Activated CD4-positive, alpha-beta T cell treated with anti-CD3 and anti-CD28 coated beads for 36 hours (primary cell): ENCODE measurements at regions of chr11 and their contacts with region 1.

Region 1: DNA sequence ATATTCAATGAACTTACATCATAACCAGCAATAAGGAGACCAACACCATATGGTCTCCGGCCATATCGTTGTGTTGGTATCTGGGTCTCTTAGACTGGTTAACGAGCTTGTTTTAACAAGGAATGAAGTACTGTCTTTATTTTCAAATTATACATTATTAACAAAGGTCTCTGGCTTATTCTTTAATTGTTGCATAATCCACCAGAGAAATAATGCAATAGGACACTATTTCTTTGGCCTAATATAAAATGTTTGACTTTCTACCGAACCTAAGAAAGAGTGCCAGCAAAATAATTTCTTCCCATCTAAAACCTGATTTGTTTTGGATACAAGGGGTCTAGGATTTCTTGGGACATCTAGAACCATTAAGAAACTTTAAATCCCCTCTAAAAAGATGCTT is 6.4 kb downstream of the PSMA1 start:
- DNase-seq: no peak
- ATAC-seq: no peak
- H3K4me3 Mint-ChIP-seq: no peak overlapping the region
- H3K27ac Mint-ChIP-seq: no peak overlapping the region
- H3K4me1 Mint-ChIP-seq: peaks cover 20% of the 10 kb centered on the region
- H3K27me3 Mint-ChIP-seq: no peaks in the 10 kb centered on the region

Region 2: DNA sequence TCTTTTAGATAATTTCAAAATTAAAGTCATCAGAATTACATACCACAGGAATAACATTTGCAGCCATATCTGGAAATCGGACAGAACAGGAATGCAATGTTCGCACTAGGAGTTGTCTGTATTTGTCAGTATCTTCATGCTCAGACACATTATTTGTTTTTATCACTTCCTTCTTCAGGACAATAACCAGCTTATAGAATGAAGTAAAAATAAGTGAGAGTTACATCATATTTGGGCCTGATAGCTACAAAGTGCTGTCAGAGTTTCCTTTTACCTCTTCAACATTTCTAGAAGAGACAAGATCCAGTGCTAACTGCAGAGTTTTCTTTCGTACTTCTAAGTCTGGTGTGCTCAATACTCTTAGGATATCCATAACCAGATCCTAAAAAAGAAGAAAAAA is 33.1 kb before region 1 on chr11:
- CTCF ChIA-PET with region 1: no interaction called
- POLR2A ChIA-PET with region 1: no interaction called
- intact Hi-C with region 1: loop called in 1 of 2 experiments (anchors 5 kb)
- DNase-seq: no peak
- ATAC-seq: no peak
- H3K4me3 Mint-ChIP-seq: no peak overlapping the region
- H3K27ac Mint-ChIP-seq: peak overlapping the region; percentile 79
- H3K4me1 Mint-ChIP-seq: peaks cover 14% of the 10 kb centered on the region
- H3K27me3 Mint-ChIP-seq: no peaks in the 10 kb centered on the region